ENCODE measurements at regions of chr17 and their contacts with region 1.

Region 1: GRCh38 chr17:19386974-19387920 is at the start of gene MFAP4:
- DNase-seq: no peak
- H3K4me3 ChIP-seq: peak within 1 kb of the TSS in 1 of 3 experiments; percentile 47
- H3K4me3 Mint-ChIP-seq: peak within 1 kb of the TSS; percentile 39 to 60
- H3K27ac ChIP-seq: peak within 1 kb of the TSS; percentile 71 to 85
- H3K27ac Mint-ChIP-seq: peak within 1 kb of the TSS; percentile 94 to 98 (median 97)
- H3K4me1 ChIP-seq: peaks cover 64 to 69% of the 10 kb centered on the region in 2 donors
- H3K4me1 Mint-ChIP-seq: peaks cover 70% of the 10 kb centered on the region
- H3K27me3 ChIP-seq: no peaks in the 10 kb centered on the region
- H3K27me3 Mint-ChIP-seq: peaks cover 0 to 7% (median 2%) of the 10 kb centered on the region in 3 donors
- CTCF ChIP-seq: no peak
- polyA plus RNA-seq, gene MFAP4: 0.12 to 0.73 (median 0.12) TPM

Region 2: DNA sequence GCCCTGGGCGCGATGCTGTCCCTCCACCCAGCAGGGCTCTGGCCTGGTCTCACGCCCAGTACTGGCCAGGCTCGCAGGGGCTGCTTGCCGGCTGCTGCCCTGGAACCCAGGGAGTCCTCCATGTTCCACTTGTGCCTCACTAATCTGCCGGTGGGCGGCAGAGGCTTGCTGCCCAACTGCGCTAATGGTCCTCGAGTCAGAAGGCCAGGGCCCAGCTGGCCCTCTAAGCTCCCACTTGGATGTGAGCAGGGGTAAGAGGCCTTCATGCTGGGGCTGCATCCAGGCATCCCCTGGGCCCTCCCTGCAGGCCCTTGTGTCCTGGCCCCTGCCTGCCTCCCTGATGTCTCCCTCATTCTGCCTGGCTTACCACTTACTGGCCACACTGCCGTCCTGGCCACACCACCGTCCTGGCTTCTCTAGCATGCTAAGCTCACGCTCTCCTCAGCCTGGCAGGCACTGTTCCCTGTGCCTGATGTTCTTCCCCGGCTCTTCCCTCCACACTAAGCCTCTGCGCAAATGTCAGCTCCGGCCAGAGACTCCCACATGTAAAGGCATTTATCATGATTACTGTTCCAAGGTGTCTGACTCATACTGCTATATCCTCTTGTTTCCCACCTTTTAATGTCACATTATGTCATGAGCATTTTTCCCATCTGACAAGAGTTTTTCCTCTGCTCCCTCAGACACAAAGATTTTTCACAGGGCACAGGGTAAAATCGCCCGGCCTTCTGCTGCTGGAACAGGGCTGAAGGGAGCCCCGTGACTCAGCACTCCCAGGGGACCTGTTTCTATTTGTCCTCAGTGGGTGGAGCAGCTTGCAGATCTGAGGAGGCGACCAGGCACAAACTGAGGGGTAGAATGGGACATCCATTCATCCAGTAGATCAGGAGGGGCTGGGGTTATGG is 40.6 kb before region 1 on chr17:
- intact Hi-C with region 1: no loop called
- DNase-seq: peak in 1 of 3 donors; percentile 2
- H3K4me3 ChIP-seq: no peak overlapping the region
- H3K4me3 Mint-ChIP-seq: no peak overlapping the region
- H3K27ac ChIP-seq: no peak overlapping the region
- H3K27ac Mint-ChIP-seq: no peak overlapping the region
- H3K4me1 ChIP-seq: no peaks in the 10 kb centered on the region
- H3K4me1 Mint-ChIP-seq: no peaks in the 10 kb centered on the region
- H3K27me3 ChIP-seq: no peaks in the 10 kb centered on the region
- H3K27me3 Mint-ChIP-seq: peaks cover under 1 to 23% (median 14%) of the 10 kb centered on the region in 3 donors
- CTCF ChIP-seq: no peak

Region 3: GRCh38 chr17:19418251-19418992 is 31.2 kb after region 1 on chr17:
- intact Hi-C with region 1: loop called in 1 of 2 experiments (anchors 5 kb)
- DNase-seq: peak; percentile 68 to 86 (median 72)
- H3K4me3 ChIP-seq: no peak overlapping the region
- H3K4me3 Mint-ChIP-seq: no peak overlapping the region
- H3K27ac ChIP-seq: no peak overlapping the region
- H3K27ac Mint-ChIP-seq: peak overlapping the region in 4 of 7 donors; percentile 11 to 77 (median 36)
- H3K4me1 ChIP-seq: peaks cover 3 to 7% of the 10 kb centered on the region in 2 donors
- H3K4me1 Mint-ChIP-seq: peaks cover 14% of the 10 kb centered on the region
- H3K27me3 ChIP-seq: no peaks in the 10 kb centered on the region
- H3K27me3 Mint-ChIP-seq: peaks cover under 1 to 8% (median 2%) of the 10 kb centered on the region in 3 donors
- CTCF ChIP-seq: peak; percentile 46

Region 4: DNA sequence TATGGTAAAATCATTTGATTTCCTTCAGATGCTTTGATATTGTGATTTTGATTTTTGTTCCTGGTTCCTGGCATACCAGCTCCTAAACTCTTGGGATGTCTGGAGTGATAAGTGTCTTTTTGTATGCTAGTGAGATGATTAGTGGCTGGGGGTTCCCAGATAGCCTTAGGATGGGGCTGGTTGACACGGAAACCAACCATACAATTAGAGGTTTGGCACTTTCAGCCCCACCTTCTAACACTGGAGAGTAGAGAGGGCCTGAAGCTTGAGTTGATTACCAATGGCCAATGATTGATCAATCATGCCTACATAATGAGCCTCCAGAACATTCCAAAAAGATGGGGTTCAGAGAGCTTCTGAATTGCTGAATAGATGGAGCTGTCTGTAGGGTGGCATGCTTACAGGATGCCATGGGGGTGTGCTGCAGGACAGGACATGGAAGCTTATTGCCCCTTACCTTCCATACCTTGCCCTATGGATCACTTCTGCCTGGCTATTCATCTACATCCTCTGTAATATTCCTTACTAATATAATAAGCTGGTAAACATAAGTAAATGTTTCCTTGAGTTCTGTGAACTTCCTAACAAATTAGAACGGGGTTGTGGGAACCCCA is 46.6 kb after region 1 on chr17:
- intact Hi-C with region 1: no loop called
- DNase-seq: no peak
- H3K4me3 ChIP-seq: no peak overlapping the region
- H3K4me3 Mint-ChIP-seq: no peak overlapping the region
- H3K27ac ChIP-seq: no peak overlapping the region
- H3K27ac Mint-ChIP-seq: peak overlapping the region in 1 of 7 donors; percentile 14
- H3K4me1 ChIP-seq: no peaks in the 10 kb centered on the region
- H3K4me1 Mint-ChIP-seq: no peaks in the 10 kb centered on the region
- H3K27me3 ChIP-seq: no peaks in the 10 kb centered on the region
- H3K27me3 Mint-ChIP-seq: peaks cover 5 to 22% (median 9%) of the 10 kb centered on the region in 3 donors
- CTCF ChIP-seq: no peak

Region 5: GRCh38 chr17:19664136-19664820 is 277.0 kb after region 1 on chr17:
- intact Hi-C with region 1: no loop called
- DNase-seq: no peak
- H3K4me3 ChIP-seq: no peak overlapping the region
- H3K4me3 Mint-ChIP-seq: no peak overlapping the region
- H3K27ac ChIP-seq: no peak overlapping the region
- H3K27ac Mint-ChIP-seq: no peak overlapping the region
- H3K4me1 ChIP-seq: no peaks in the 10 kb centered on the region
- H3K4me1 Mint-ChIP-seq: no peaks in the 10 kb centered on the region
- H3K27me3 ChIP-seq: no peaks in the 10 kb centered on the region
- H3K27me3 Mint-ChIP-seq: peaks cover 0 to 2% (median 0%) of the 10 kb centered on the region in 3 donors
- CTCF ChIP-seq: no peak

Region 6: GRCh38 chr17:19753049-19753444 is 365.8 kb after region 1 on chr17:
- intact Hi-C with region 1: no loop called
- DNase-seq: peak; percentile 85 to 94 (median 91)
- H3K4me3 ChIP-seq: no peak overlapping the region
- H3K4me3 Mint-ChIP-seq: peak overlapping the region in 1 of 2 donors; percentile 74
- H3K27ac ChIP-seq: no peak overlapping the region
- H3K27ac Mint-ChIP-seq: peak overlapping the region in 6 of 7 donors; percentile 3 to 70 (median 32)
- H3K4me1 ChIP-seq: peaks cover 16 to 17% of the 10 kb centered on the region in 2 donors
- H3K4me1 Mint-ChIP-seq: peaks cover 20% of the 10 kb centered on the region
- H3K27me3 ChIP-seq: no peaks in the 10 kb centered on the region
- H3K27me3 Mint-ChIP-seq: peaks cover 0 to 12% (median 0%) of the 10 kb centered on the region in 3 donors
- CTCF ChIP-seq: no peak